AG04450 (cell line): ENCODE measurements at regions of chr6 and their contacts with region 1.

Region 1: DNA sequence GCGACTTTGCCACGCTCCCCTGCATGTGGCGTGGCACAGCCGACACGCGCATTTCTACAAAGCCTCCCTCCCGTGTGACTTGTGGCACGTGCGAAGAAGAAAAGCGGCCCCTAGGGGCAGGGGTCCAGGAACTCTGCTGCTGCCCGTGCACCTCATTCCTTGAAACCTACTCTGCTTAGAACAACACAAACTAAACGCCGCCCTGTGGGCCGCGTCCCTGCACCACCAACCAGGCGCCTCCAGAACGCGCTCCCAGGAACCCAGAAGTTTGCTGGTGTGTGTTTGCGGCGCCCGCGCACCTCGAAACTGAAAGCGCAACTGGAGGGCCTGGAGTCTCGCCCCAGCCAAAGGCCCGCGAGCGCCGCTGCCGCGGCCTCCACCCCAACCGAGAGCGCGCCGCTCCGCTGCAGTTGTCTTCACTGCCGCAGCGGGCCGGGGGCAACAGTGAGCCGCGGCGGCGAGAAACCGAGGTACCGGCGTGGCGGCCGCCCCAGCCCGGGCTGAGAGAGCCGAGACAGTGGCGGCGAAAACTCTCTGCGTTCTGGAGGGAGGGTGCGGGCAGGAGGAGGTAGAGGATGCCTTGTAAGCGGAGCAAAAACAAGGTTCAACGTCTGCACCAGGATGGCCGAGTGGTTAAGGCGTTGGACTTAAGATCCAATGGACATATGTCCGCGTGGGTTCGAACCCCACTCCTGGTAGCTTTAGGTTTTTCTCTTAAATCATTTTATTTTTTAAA is 65.8 kb downstream of the STX11 start:
- DNase-seq: peak; percentile 95
- H3K4me3 ChIP-seq: peak overlapping the region; percentile 70
- H3K27ac ChIP-seq: peak overlapping the region; percentile 84
- H3K27me3 ChIP-seq: no peaks in the 10 kb centered on the region
- CTCF ChIP-seq: peak; percentile 69

Region 2: GRCh38 chr6:144104898-144105487 is 111.1 kb before region 1 on chr6:
- CTCF ChIA-PET with region 1: interaction called, 12 read pairs
- POLR2A ChIA-PET with region 1: no interaction called
- DNase-seq: peak; percentile 29
- H3K4me3 ChIP-seq: no peak overlapping the region
- H3K27ac ChIP-seq: no peak overlapping the region
- H3K27me3 ChIP-seq: no peaks in the 10 kb centered on the region
- CTCF ChIP-seq: peak; percentile 73

Region 3: GRCh38 chr6:144285798-144286502 is 69.8 kb after region 1 on chr6:
- CTCF ChIA-PET with region 1: interaction called, 3 read pairs
- POLR2A ChIA-PET with region 1: interaction called, 10 read pairs
- DNase-seq: no peak
- H3K4me3 ChIP-seq: peak overlapping the region; percentile 83
- H3K27ac ChIP-seq: peak overlapping the region; percentile 94
- H3K27me3 ChIP-seq: no peaks in the 10 kb centered on the region
- CTCF ChIP-seq: no peak

Region 4: GRCh38 chr6:144482142-144482541 is 266.0 kb after region 1 on chr6:
- CTCF ChIA-PET with region 1: interaction called, 21 read pairs
- POLR2A ChIA-PET with region 1: no interaction called
- DNase-seq: peak; percentile 63
- H3K4me3 ChIP-seq: no peak overlapping the region
- H3K27ac ChIP-seq: no peak overlapping the region
- H3K27me3 ChIP-seq: no peaks in the 10 kb centered on the region
- CTCF ChIP-seq: peak; percentile 69